Ascending aorta (tissue), 2 donors: ENCODE measurements at regions of chr2 and their contacts with region 1.

Region 1: DNA sequence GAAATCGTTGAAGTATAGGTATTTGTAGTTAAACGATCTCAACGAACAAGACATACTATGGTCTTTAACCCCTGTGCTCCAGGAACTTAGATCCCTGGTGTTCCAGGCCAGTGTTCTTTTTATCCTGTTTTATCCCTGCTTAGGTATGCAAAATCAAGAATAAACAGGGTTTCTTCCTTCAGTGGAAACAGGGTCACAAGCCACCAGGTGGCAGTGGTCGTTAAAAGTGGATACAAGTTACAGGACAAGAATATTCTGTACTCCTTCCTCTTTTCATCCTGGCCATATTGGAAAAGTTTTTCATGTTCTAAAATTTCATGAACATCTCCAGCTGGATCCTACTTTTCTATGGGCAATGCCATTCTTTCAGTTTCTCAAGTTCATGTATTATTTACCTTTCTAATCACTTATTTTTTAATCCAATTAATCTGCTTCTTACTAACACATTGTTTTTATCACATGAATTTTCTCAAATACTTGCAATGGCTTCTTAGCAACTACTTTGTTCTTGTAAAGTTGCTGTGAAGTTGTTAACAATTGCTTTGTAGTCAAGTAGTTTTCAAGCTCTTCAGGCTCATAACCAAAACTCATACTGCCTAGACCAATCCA is 16.4 kb upstream of the HNMT start:
- DNase-seq: peak; percentile 15 to 83
- H3K4me3 ChIP-seq: no peak overlapping the region
- H3K27ac ChIP-seq: no peak overlapping the region
- H3K4me1 ChIP-seq: no peaks in the 10 kb centered on the region
- H3K27me3 ChIP-seq: no peaks in the 10 kb centered on the region
- CTCF ChIP-seq: peak; percentile 49 to 68 (median 58)

Region 2: GRCh38 chr2:137897082-137897481 is 50.8 kb before region 1 on chr2:
- intact Hi-C with region 1: no loop called
- DNase-seq: no peak
- H3K4me3 ChIP-seq: no peak overlapping the region
- H3K27ac ChIP-seq: no peak overlapping the region
- H3K4me1 ChIP-seq: no peaks in the 10 kb centered on the region
- H3K27me3 ChIP-seq: no peaks in the 10 kb centered on the region
- CTCF ChIP-seq: no peak

Region 3: GRCh38 chr2:138071720-138072719 is 124.2 kb after region 1 on chr2:
- intact Hi-C with region 1: no loop called
- DNase-seq: no peak
- H3K4me3 ChIP-seq: no peak overlapping the region
- H3K27ac ChIP-seq: no peak overlapping the region
- H3K4me1 ChIP-seq: no peaks in the 10 kb centered on the region
- H3K27me3 ChIP-seq: no peaks in the 10 kb centered on the region
- CTCF ChIP-seq: no peak

Region 4: DNA sequence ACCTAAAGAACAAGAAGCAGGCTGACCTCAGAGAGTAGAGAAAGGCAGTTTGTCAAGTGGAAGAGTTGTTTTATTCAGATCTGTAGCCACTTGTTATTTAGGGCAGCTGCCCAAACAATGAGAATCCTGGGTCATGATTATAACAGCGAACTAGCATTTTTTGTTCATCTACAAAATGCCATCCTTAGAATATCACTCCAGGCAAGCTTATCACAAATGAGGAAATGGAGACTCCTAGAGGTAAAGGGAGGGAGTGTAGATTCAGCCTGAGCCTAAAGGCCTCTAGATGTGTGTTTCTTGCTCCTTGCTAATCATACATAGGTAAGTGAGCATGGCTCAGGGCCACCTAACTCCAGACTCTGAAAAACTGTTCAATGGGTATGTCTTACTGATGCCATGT is 142.5 kb after region 1 on chr2:
- intact Hi-C with region 1: loop called (anchors 5 kb)
- DNase-seq: no peak
- H3K4me3 ChIP-seq: no peak overlapping the region
- H3K27ac ChIP-seq: no peak overlapping the region
- H3K4me1 ChIP-seq: peaks cover 0 to 4% of the 10 kb centered on the region in 2 donors
- H3K27me3 ChIP-seq: no peaks in the 10 kb centered on the region
- CTCF ChIP-seq: peak; percentile 37 to 63 (median 43)